ENCODE measurements at regions of chr14 and their contacts with region 1.

Region 1: DNA sequence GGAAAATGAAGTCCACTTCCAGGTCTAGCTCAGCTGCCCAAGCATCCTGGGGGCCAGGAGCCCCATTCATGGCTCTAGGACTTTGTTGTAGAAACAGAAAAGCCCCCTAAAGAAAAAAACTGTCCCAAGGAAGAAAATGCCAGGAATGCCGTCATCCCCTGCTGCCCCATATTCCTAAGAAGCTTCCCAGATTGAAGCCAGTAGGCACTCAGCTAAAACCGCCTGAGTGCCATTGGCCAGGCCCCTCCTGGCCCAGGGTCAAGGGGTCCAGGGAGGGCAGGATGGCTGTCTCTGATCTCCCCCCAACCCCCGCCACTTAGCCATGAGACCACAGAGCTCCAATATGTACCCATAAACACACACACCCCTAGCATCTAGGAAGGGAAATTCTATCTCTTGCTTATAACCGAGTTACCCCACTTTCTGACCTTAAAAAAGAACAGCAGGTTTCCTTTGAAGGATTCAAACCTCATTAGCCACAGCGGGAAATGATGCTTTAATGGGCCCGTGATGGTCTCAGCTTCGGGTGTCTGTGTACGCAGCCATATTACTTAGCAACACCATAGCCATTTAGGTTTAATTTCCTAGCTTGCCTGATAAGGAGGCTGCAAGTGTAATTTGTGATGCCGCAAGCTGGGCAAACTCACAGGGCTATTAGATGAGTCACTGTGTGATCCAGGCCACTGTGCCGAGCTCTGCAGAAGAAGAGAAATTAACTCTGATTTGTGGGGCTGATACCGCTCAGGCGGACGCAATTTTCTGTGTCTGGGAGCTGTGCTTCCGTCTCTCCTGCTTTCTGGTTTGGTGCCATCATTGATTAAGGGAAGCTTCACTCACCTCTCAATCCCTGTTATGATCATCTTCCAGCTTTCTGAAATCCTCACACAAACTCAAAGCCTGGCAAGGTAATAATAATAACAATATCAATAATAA is 84.2 kb downstream of the GCH1 start:
- DNase-seq: no peak
- H3K4me3 ChIP-seq: no peak overlapping the region
- H3K27ac ChIP-seq: no peak overlapping the region
- H3K4me1 ChIP-seq: no peaks in the 10 kb centered on the region
- H3K27me3 ChIP-seq: no peaks in the 10 kb centered on the region
- CTCF ChIP-seq: no peak

Region 2: GRCh38 chr14:54475187-54475899 is 343.1 kb before region 1 on chr14:
- CTCF ChIA-PET with region 1: no interaction called
- dilution Hi-C with region 1: no loop called
- in situ Hi-C with region 1: no loop called
- intact Hi-C with region 1: no loop called
- DNase-seq: no peak
- H3K4me3 ChIP-seq: no peak overlapping the region
- H3K27ac ChIP-seq: peak overlapping the region; percentile 9
- H3K4me1 ChIP-seq: no peaks in the 10 kb centered on the region
- H3K27me3 ChIP-seq: no peaks in the 10 kb centered on the region
- CTCF ChIP-seq: no peak

Region 3: GRCh38 chr14:54555651-54556050 is 262.8 kb before region 1 on chr14:
- CTCF ChIA-PET with region 1: no interaction called
- dilution Hi-C with region 1: no loop called
- in situ Hi-C with region 1: loop called in 1 of 2 experiments (anchors 10 kb)
- intact Hi-C with region 1: no loop called
- DNase-seq: no peak
- H3K4me3 ChIP-seq: no peak overlapping the region
- H3K27ac ChIP-seq: no peak overlapping the region
- H3K4me1 ChIP-seq: no peaks in the 10 kb centered on the region
- H3K27me3 ChIP-seq: no peaks in the 10 kb centered on the region
- CTCF ChIP-seq: peak; percentile 6 to 18

Region 4: GRCh38 chr14:54742492-54743350 is 75.7 kb before region 1 on chr14:
- CTCF ChIA-PET with region 1: no interaction called
- dilution Hi-C with region 1: loop called (anchors 5 kb)
- in situ Hi-C with region 1: no loop called
- intact Hi-C with region 1: no loop called
- DNase-seq: no peak
- H3K4me3 ChIP-seq: no peak overlapping the region
- H3K27ac ChIP-seq: no peak overlapping the region
- H3K4me1 ChIP-seq: peaks cover 8% of the 10 kb centered on the region
- H3K27me3 ChIP-seq: no peaks in the 10 kb centered on the region
- CTCF ChIP-seq: no peak

Region 5: GRCh38 chr14:54762296-54762695 is 56.2 kb before region 1 on chr14:
- CTCF ChIA-PET with region 1: no interaction called
- dilution Hi-C with region 1: no loop called
- in situ Hi-C with region 1: no loop called
- intact Hi-C with region 1: no loop called
- DNase-seq: no peak
- H3K4me3 ChIP-seq: no peak overlapping the region
- H3K27ac ChIP-seq: no peak overlapping the region
- H3K4me1 ChIP-seq: no peaks in the 10 kb centered on the region
- H3K27me3 ChIP-seq: no peaks in the 10 kb centered on the region
- CTCF ChIP-seq: no peak

Region 6: GRCh38 chr14:54845641-54846040 is 27.2 kb after region 1 on chr14:
- CTCF ChIA-PET with region 1: no interaction called
- dilution Hi-C with region 1: loop called (anchors 5 kb)
- in situ Hi-C with region 1: no loop called
- intact Hi-C with region 1: no loop called
- DNase-seq: no peak
- H3K4me3 ChIP-seq: no peak overlapping the region
- H3K27ac ChIP-seq: no peak overlapping the region
- H3K4me1 ChIP-seq: no peaks in the 10 kb centered on the region
- H3K27me3 ChIP-seq: no peaks in the 10 kb centered on the region
- CTCF ChIP-seq: no peak

Region 7: GRCh38 chr14:54893151-54893760 is 74.8 kb after region 1 on chr14:
- CTCF ChIA-PET with region 1: no interaction called
- dilution Hi-C with region 1: loop called (anchors 5 kb)
- in situ Hi-C with region 1: no loop called
- intact Hi-C with region 1: no loop called
- DNase-seq: peak; percentile 86
- H3K4me3 ChIP-seq: no peak overlapping the region
- H3K27ac ChIP-seq: peak overlapping the region; percentile 18
- H3K4me1 ChIP-seq: peaks cover 7% of the 10 kb centered on the region
- H3K27me3 ChIP-seq: no peaks in the 10 kb centered on the region
- CTCF ChIP-seq: peak; percentile 77 to 89